ENCODE measurements at regions of chr6 and their contacts with region 1.

Region 1: DNA sequence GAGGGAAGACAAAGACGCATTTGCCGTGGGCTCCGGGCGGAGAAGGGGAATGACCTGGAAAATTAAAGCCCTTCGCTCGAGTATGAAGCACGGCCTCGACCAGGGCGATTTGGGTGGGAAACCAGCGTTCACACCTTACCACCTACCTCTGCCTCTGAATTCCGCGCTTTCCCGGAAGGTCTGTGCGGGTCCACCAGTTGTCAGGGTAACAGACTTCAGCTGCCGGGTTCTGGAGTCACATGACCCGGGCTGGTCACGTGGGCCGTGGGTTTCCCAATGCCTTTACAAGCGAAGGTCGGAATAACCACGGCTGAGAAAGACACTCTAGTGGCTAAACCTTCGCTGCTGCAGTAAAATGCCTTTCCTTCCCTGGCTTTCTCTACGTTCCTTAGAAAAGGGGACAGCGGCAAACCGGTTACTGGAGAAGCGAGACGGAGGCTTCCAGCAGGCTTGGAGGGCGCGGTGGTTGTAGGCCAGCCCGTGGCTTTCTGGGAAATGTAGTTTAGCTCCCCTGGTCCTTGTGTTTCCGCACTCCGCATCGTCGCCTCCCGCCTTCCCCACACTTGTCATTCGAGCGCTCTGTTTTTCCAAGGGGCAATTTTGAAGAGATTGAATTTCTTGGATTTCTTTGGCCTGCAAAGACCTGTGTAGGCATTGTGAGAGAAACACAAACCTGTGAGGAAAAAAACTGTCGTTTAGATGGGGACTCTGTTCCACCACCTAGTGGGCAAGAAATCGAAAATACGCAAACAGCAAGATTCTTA is at the start of gene CEP162:
- DNase-seq: peak; percentile 96
- total RNA-seq, gene CEP162: 4.3 TPM

Region 2: GRCh38 chr6:83883240-83883639 is 344.4 kb before region 1 on chr6:
- intact Hi-C with region 1: loop called (anchors 2 kb)
- DNase-seq: no peak

Region 3: GRCh38 chr6:84052204-84052882 is 175.3 kb before region 1 on chr6:
- intact Hi-C with region 1: no loop called
- DNase-seq: peak; percentile 82

Measured in cardiac septum (tissue), 1 donor.